Endothelial cell of umbilical vein (primary cell): ENCODE measurements at regions of chr10 and their contacts with region 1.

Region 1: DNA sequence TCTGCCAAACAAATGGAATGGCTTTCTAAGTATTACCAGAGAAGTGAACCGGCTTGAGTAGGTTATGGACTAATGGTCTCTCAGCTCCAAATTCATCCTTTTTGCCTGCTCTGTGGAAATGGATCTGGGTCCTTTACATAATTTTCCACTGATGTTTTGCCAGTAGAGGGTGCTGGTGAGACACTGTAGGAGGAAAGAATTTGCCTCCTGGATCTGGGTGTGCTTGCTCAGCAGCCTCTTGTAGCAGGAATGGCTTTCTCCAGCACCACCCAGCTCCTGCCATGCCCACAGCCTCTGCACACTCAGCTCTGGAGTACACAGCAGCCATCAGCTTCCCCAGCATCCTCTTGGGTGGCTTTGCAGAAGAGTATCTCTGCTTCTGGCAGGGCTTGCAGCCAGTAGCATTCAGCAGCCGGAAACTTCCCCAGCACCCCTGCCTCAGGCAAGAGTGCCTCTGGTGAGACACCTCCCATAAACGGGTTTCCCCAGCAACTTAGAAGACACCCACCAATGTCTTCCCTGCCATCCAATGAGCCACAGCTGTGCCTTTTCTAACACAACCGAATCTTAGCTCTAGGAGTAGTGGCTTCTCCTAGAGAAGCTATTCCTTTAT is 235.0 kb upstream of the PLPP4 start:
- DNase-seq: peak; percentile 64
- H3K4me3 ChIP-seq: no peak overlapping the region
- H3K27ac ChIP-seq: no peak overlapping the region
- H3K4me1 ChIP-seq: no peaks in the 10 kb centered on the region
- H3K27me3 ChIP-seq: no peaks in the 10 kb centered on the region
- CTCF ChIP-seq: peak; percentile 64 to 65
- POLR2A ChIP-seq: no peak

Region 2: GRCh38 chr10:119859420-119860258 is 362.3 kb before region 1 on chr10:
- CTCF ChIA-PET with region 1: no interaction called
- POLR2A ChIA-PET with region 1: no interaction called
- dilution Hi-C with region 1: no loop called
- intact Hi-C with region 1: no loop called
- DNase-seq: peak; percentile 74
- H3K4me3 ChIP-seq: no peak overlapping the region
- H3K27ac ChIP-seq: no peak overlapping the region
- H3K4me1 ChIP-seq: peaks cover 5% of the 10 kb centered on the region
- H3K27me3 ChIP-seq: no peaks in the 10 kb centered on the region
- CTCF ChIP-seq: peak; percentile 27 to 36
- POLR2A ChIP-seq: no peak

Region 3: DNA sequence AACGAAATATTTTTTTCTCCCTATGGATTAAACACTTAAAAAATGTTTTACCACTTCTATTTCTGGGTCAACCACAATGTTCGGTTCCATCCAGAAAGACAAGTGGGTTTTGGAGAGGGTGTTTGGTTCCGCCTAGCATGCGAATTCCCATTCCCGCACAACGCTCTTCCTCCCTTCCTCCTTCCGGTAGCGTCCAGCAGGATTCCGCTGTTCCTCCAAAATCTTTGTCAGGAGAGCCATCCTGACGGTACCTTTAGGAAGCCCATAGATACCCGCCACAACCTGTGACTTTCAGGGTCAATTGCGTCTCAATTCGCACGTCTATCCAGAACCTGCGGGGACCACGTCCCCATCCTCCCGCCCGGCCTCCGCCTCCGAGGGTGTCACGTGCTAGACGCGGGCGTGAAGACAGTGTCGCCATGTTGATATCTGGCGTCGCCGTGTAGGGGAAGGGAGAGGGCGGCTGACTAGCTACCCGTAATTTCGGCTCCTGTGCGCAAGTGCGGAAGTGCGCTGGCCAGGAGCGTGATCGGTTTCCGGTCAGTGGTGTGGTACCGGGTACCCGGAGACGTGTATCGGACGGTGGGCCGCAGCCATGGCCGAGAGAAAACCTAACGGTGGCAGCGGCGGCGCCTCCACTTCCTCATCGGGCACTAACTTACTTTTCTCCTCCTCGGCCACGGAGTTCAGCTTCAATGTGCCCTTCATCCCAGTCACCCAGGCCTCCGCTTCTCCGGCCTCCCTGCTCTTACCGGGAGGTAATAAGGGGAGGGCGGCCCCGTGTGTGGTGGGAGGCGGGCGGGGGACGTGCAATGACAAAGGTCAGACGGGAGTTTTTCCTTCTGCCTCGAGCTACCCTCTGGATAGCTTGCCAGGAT is 329.6 kb before region 1 on chr10 and contains the start of gene SEC23IP:
- CTCF ChIA-PET with region 1: no interaction called
- POLR2A ChIA-PET with region 1: no interaction called
- dilution Hi-C with region 1: no loop called
- intact Hi-C with region 1: no loop called
- DNase-seq: peak; percentile 97
- H3K4me3 ChIP-seq: peak within 1 kb of the TSS; percentile 68 to 85 (median 71)
- H3K27ac ChIP-seq: peak within 1 kb of the TSS; percentile 42
- H3K4me1 ChIP-seq: peaks cover 12% of the 10 kb centered on the region
- H3K27me3 ChIP-seq: no peaks in the 10 kb centered on the region
- CTCF ChIP-seq: no peak
- POLR2A ChIP-seq: peak; percentile 95
- total RNA-seq, gene SEC23IP: 83.1 and 85.4 TPM in 2 replicates

Region 4: DNA sequence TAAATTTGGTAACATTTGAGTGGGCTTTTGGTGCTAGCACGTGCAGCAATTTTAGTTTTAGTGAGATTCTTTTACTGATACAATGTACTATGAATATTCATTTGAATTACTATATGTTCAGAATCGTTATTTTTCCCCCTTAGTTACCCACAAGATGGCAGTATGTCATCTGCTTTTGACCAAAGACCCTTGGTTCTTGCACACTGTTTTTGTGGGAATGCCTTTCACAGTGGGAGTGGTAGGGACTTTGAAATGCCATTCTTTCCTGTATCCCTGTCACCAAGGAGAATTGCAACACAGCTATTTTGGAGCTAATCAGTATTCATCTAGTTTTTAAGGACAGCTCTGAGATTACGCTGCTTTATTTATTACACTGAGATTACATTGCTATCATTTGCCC is 288.8 kb before region 1 on chr10:
- CTCF ChIA-PET with region 1: no interaction called
- POLR2A ChIA-PET with region 1: no interaction called
- dilution Hi-C with region 1: no loop called
- intact Hi-C with region 1: loop called (anchors 5 kb)
- DNase-seq: peak; percentile 19
- H3K4me3 ChIP-seq: no peak overlapping the region
- H3K27ac ChIP-seq: no peak overlapping the region
- H3K4me1 ChIP-seq: no peaks in the 10 kb centered on the region
- H3K27me3 ChIP-seq: no peaks in the 10 kb centered on the region
- CTCF ChIP-seq: peak in 1 of 2 donors; percentile 3
- POLR2A ChIP-seq: no peak

Region 5: GRCh38 chr10:120336911-120337540 is 115.0 kb after region 1 on chr10:
- CTCF ChIA-PET with region 1: interaction called, 59 read pairs
- POLR2A ChIA-PET with region 1: no interaction called
- dilution Hi-C with region 1: no loop called
- intact Hi-C with region 1: loop called (anchors 1 kb)
- DNase-seq: peak; percentile 66
- H3K4me3 ChIP-seq: no peak overlapping the region
- H3K27ac ChIP-seq: no peak overlapping the region
- H3K4me1 ChIP-seq: no peaks in the 10 kb centered on the region
- H3K27me3 ChIP-seq: peaks cover 0 to 2% of the 10 kb centered on the region in 2 experiments
- CTCF ChIP-seq: peak; percentile 82 to 85
- POLR2A ChIP-seq: no peak

Region 6: GRCh38 chr10:120650705-120651399 is 428.9 kb after region 1 on chr10:
- CTCF ChIA-PET with region 1: interaction called, 9 read pairs
- POLR2A ChIA-PET with region 1: no interaction called
- dilution Hi-C with region 1: no loop called
- intact Hi-C with region 1: loop called (anchors 5 kb)
- DNase-seq: peak; percentile 73
- H3K4me3 ChIP-seq: no peak overlapping the region
- H3K27ac ChIP-seq: peak overlapping the region; percentile 32
- H3K4me1 ChIP-seq: peaks cover 9% of the 10 kb centered on the region
- H3K27me3 ChIP-seq: no peaks in the 10 kb centered on the region
- CTCF ChIP-seq: no peak
- POLR2A ChIP-seq: no peak

Region 7: DNA sequence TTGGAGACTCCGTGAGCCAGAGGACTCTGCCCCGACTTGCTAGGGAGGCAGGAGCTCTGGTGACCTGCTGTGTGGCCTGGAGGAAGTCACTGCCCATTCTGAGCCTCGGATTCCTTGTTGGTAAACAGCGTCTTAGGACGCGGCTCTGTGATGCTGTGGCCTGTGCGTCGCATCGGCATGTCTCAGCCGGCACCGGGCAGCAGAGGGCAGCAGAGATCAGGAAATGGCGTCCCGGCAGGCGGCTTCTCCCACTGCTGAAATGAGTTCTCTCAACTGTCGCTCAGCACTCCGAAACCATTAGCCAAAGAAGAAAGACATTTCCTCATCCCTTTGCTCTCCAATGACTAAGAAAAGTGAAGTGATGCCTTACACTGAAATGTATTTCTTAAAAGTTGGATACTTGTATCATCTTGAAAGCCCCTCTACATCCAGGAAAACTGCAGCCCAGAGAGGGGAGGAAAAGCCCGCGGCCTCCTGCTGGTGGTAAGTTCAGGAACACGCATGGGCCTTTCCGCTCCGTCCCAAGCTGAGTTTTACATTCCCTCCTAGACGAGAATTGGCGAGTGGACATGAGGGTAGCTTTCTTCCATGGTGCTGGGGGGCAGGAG is 720.9 kb after region 1 on chr10:
- CTCF ChIA-PET with region 1: interaction called, 4 read pairs
- POLR2A ChIA-PET with region 1: no interaction called
- dilution Hi-C with region 1: no loop called
- intact Hi-C with region 1: loop called (anchors 1 kb)
- DNase-seq: peak; percentile 81
- H3K4me3 ChIP-seq: no peak overlapping the region
- H3K27ac ChIP-seq: no peak overlapping the region
- H3K4me1 ChIP-seq: no peaks in the 10 kb centered on the region
- H3K27me3 ChIP-seq: no peaks in the 10 kb centered on the region
- CTCF ChIP-seq: peak; percentile 83 to 85
- POLR2A ChIP-seq: no peak